Common myeloid progenitor, CD34-positive (primary cell): ENCODE measurements at regions of chr7 and their contacts with region 1.

Region 1: GRCh38 chr7:74173866-74174605 is at the start of gene EIF4H:
- DNase-seq: peak; percentile 93 to 97 (median 96)
- H3K4me3 ChIP-seq: peak within 1 kb of the TSS; percentile 76 to 95 (median 85)
- H3K27ac ChIP-seq: peak within 1 kb of the TSS; percentile 90 to 95
- H3K4me1 ChIP-seq: peaks cover 20 to 53% (median 45%) of the 10 kb centered on the region in 4 experiments
- H3K27me3 ChIP-seq: no peaks in the 10 kb centered on the region

Region 2: DNA sequence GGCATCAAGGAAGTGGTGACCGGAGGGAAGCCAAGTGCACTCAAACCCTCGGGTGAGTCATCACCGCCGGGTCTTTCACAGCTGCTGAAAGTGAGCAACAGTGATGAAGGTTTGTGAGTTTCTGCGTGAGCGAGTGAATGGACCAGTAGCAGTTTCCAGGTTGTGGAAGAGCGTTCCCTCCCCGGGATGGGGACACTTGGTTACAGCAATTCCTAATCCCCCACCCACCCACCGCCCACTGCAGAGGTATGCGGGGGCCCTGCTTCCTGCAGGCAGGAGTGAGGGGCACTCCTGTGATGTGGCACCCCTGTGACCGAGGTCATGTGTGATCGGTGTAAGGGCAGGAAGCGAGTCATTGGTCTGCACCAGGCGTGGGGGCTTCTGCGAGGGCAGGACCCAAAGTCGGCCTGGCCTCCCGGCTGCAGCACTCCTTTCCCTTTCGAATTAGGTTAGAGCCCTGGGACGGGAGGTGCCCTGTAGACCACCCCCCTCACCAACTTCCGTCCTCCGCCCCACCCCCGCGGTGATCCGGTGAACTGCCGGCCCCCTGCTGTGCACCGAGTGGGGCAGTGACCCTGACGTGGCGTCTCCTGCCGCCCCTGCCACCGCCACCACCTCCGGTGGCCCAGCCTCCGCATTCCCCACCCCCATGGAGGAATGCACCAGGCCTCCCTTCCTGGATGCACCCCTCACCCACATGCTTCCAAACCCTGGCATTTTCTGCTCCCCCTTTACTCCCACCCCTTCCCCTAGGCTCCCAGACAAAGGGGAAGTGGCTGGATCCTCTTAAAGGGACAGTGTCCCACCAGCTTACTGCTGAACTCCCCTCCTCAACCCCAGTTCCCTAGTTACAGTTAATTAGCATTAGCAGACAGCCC is 79.6 kb before region 1 on chr7:
- CTCF ChIA-PET with region 1: no interaction called
- POLR2A ChIA-PET with region 1: interaction called, 10 read pairs
- DNase-seq: peak; percentile 68 to 94 (median 91)
- H3K4me3 ChIP-seq: peak overlapping the region; percentile 21 to 83 (median 65)
- H3K27ac ChIP-seq: peak overlapping the region; percentile 66 to 78
- H3K4me1 ChIP-seq: peaks cover 0 to 43% (median 37%) of the 10 kb centered on the region in 4 experiments
- H3K27me3 ChIP-seq: no peaks in the 10 kb centered on the region

Region 3: DNA sequence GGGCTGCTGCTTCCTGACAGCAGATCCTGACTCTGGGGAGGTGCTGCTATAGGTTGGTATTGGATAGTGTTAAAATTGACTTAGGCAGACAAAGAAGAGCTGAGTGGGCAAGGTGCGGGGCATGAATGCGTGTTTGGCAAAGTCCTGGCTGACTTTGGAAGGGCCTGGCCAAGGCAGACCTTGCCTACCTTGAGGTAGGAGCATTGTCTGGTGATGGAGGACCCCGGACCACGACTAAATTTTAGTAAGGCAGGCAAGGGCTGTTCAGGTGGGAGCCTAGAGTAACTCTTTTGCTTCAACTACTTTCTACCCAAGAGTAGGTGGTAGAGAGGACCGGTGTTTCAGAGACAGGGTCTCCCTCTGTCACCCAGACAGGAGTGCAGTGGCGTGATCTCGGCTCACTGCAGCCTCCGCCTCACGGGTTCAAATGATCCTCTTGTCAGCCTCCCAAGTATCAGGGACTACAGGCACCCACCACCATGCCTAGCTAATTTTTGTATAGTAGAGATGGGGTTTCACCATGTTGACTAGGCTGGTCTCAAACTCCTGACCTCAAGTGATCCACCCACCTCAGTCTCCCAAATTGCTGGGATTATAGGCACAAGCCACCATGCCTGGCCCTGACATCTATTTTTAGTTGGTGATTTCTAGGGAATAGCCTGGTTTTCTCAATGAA is 23.6 kb after region 1 on chr7:
- CTCF ChIA-PET with region 1: interaction called, 13 read pairs
- POLR2A ChIA-PET with region 1: interaction called, 4 read pairs
- DNase-seq: no peak
- H3K4me3 ChIP-seq: no peak overlapping the region
- H3K27ac ChIP-seq: no peak overlapping the region
- H3K4me1 ChIP-seq: peaks cover 0 to 27% (median 18%) of the 10 kb centered on the region in 4 experiments
- H3K27me3 ChIP-seq: no peaks in the 10 kb centered on the region

Region 4: GRCh38 chr7:74527842-74528241 is 353.8 kb after region 1 on chr7:
- CTCF ChIA-PET with region 1: no interaction called
- POLR2A ChIA-PET with region 1: no interaction called
- DNase-seq: no peak
- H3K4me3 ChIP-seq: no peak overlapping the region
- H3K27ac ChIP-seq: no peak overlapping the region
- H3K4me1 ChIP-seq: no peaks in the 10 kb centered on the region
- H3K27me3 ChIP-seq: no peaks in the 10 kb centered on the region